CD8-positive, alpha-beta T cell (primary cell): ENCODE measurements at regions of chr3 and their contacts with region 1.

Region 1: DNA sequence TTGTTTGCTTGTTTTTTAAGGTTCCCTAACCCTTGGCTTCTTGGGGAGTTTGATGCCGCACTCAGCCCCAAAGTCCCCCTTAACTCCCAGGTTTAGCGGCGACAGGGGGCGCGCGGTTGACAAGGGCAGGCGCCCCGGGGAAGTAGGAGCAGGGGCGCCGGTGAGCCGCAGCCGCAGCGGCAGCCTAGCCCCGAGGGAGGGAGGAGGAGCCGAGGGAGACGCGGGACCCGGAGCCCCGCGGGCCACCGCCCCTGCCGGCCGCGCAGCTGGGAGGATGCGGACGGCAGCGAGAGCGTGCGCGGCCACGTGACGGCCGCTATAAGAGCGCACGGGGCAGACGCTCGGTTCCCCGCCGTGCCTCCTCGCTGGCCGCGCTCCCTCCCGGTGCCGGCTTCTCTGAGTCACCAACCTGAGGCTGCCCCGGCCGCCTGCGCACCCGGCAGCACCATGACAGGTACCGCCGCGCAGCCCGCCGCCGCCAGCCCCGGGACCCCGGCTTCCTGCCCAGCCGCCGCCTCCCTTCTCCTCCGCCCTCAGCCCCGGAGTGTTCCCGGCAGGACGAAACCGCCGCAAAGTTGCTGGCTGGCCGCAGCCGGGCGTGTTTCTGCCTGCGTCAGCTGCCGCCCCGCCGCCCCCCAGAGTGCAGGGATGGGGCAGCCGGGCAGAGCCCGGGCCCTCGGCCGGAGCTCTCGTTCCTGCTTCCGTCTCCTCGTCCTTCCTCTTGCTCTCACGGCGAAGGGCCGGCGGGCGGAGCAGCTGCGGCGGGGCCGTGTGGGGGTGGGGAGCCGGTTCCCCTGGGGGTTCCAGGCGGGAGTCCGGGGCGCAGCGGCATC is at the start of gene GYG1:
- DNase-seq: peak; percentile 59 to 94 (median 79)
- ATAC-seq: peak; percentile 81
- H3K4me3 ChIP-seq: peak within 1 kb of the TSS; percentile 46 to 66
- H3K4me3 Mint-ChIP-seq: peak within 1 kb of the TSS; percentile 80
- H3K27ac ChIP-seq: peak within 1 kb of the TSS; percentile 69 to 79
- H3K27ac Mint-ChIP-seq: peak within 1 kb of the TSS; percentile 84
- H3K4me1 ChIP-seq: peaks cover 18% of the 10 kb centered on the region
- H3K4me1 Mint-ChIP-seq: peaks cover 35% of the 10 kb centered on the region
- H3K27me3 ChIP-seq: no peaks in the 10 kb centered on the region
- H3K27me3 Mint-ChIP-seq: no peaks in the 10 kb centered on the region
- CTCF ChIP-seq: peak; percentile 45
- total RNA-seq, gene GYG1: 29.4 to 35.2 TPM

Region 2: DNA sequence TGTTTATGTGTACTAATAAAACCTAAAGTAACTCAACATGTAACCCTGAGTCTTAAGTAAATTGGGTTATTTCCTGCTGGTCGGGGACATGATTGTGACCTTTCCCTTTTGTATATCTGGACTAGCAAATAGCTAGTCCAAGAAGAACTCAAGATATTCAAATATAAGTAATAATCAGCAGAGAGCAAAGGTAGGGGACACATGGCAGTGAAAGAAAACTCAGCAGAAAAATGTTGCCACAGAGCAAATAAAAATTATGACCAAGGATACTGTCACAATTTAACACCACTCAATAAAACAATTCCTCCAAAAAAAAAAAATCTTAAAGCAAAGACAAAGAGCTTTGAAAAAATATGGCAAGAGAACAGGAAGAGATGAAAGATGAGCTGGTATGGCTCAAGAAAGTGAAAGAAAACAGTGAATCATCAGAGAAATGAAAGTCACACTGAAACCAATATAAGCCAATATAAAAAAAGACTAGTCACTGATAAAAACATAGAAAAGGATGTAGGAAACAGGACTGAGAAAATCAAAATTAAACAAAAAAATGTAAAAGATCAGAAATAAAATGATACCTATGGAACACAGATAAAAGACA is 51.5 kb after region 1 on chr3:
- CTCF ChIA-PET with region 1: no interaction called
- POLR2A ChIA-PET with region 1: no interaction called
- intact Hi-C with region 1: loop called in 1 of 2 experiments (anchors 1 kb)
- DNase-seq: peak in 2 of 9 experiments; percentile 5 to 18
- ATAC-seq: no peak
- H3K4me3 ChIP-seq: no peak overlapping the region
- H3K4me3 Mint-ChIP-seq: no peak overlapping the region
- H3K27ac ChIP-seq: no peak overlapping the region
- H3K27ac Mint-ChIP-seq: peak overlapping the region; percentile 38
- H3K4me1 ChIP-seq: peaks cover 7% of the 10 kb centered on the region
- H3K4me1 Mint-ChIP-seq: peaks cover 20% of the 10 kb centered on the region
- H3K27me3 ChIP-seq: no peaks in the 10 kb centered on the region
- H3K27me3 Mint-ChIP-seq: no peaks in the 10 kb centered on the region
- CTCF ChIP-seq: no peak

Region 3: GRCh38 chr3:149086232-149086988 is 95.0 kb after region 1 on chr3 and contains the start of gene HLTF:
- CTCF ChIA-PET with region 1: interaction called, 3 read pairs
- POLR2A ChIA-PET with region 1: interaction called, 3 read pairs
- intact Hi-C with region 1: loop called (anchors 1 to 2 kb)
- DNase-seq: peak; percentile 82 to 97 (median 92)
- ATAC-seq: peak; percentile 98
- H3K4me3 ChIP-seq: peak within 1 kb of the TSS; percentile 87 to 94
- H3K4me3 Mint-ChIP-seq: peak within 1 kb of the TSS; percentile 99
- H3K27ac ChIP-seq: peak within 1 kb of the TSS; percentile 57 to 63
- H3K27ac Mint-ChIP-seq: peak within 1 kb of the TSS; percentile 92
- H3K4me1 ChIP-seq: peaks cover 13% of the 10 kb centered on the region
- H3K4me1 Mint-ChIP-seq: peaks cover 21% of the 10 kb centered on the region
- H3K27me3 ChIP-seq: no peaks in the 10 kb centered on the region
- H3K27me3 Mint-ChIP-seq: no peaks in the 10 kb centered on the region
- CTCF ChIP-seq: no peak
- total RNA-seq, gene HLTF: 4.6 to 6.3 TPM